ENCODE measurements at regions of chr20 and their contacts with region 1.

Region 1: GRCh38 chr20:25390538-25391528 is at the start of gene ABHD12:
- DNase-seq: peak; percentile 88 to 96 (median 92)
- ATAC-seq: peak; percentile 91
- H3K4me3 ChIP-seq: peak within 1 kb of the TSS; percentile 55 to 70
- H3K4me3 Mint-ChIP-seq: peak within 1 kb of the TSS; percentile 85
- H3K27ac ChIP-seq: peak within 1 kb of the TSS; percentile 47 to 51
- H3K27ac Mint-ChIP-seq: peak within 1 kb of the TSS; percentile 84
- H3K4me1 ChIP-seq: peaks cover 5% of the 10 kb centered on the region
- H3K4me1 Mint-ChIP-seq: peaks cover 20% of the 10 kb centered on the region
- H3K27me3 ChIP-seq: no peaks in the 10 kb centered on the region
- H3K27me3 Mint-ChIP-seq: no peaks in the 10 kb centered on the region
- CTCF ChIP-seq: no peak
- total RNA-seq, gene ABHD12: 14.1 to 17.9 TPM

Region 2: GRCh38 chr20:24027229-24027628 is 1363.6 kb before region 1 on chr20:
- CTCF ChIA-PET with region 1: no interaction called
- POLR2A ChIA-PET with region 1: no interaction called
- intact Hi-C with region 1: loop called in 1 of 2 experiments (anchors 10 kb)
- DNase-seq: peak; percentile 56 to 92 (median 78)
- ATAC-seq: peak; percentile 98
- H3K4me3 ChIP-seq: peak overlapping the region in 1 of 2 experiments; percentile 0
- H3K4me3 Mint-ChIP-seq: peak overlapping the region; percentile 62
- H3K27ac ChIP-seq: peak overlapping the region; percentile 82 to 94
- H3K27ac Mint-ChIP-seq: peak overlapping the region; percentile 97
- H3K4me1 ChIP-seq: peaks cover 26% of the 10 kb centered on the region
- H3K4me1 Mint-ChIP-seq: peaks cover 44% of the 10 kb centered on the region
- H3K27me3 ChIP-seq: no peaks in the 10 kb centered on the region
- H3K27me3 Mint-ChIP-seq: no peaks in the 10 kb centered on the region
- CTCF ChIP-seq: no peak

Region 3: GRCh38 chr20:25148181-25148981 is 242.5 kb before region 1 on chr20:
- CTCF ChIA-PET with region 1: no interaction called
- POLR2A ChIA-PET with region 1: no interaction called
- intact Hi-C with region 1: loop called in 1 of 2 experiments (anchors 5 kb)
- DNase-seq: peak; percentile 22 to 83 (median 73)
- ATAC-seq: peak; percentile 97
- H3K4me3 ChIP-seq: peak overlapping the region; percentile 47 to 49
- H3K4me3 Mint-ChIP-seq: peak overlapping the region; percentile 89
- H3K27ac ChIP-seq: peak overlapping the region in 1 of 2 experiments; percentile 3
- H3K27ac Mint-ChIP-seq: peak overlapping the region; percentile 86
- H3K4me1 ChIP-seq: peaks cover 7% of the 10 kb centered on the region
- H3K4me1 Mint-ChIP-seq: peaks cover 8% of the 10 kb centered on the region
- H3K27me3 ChIP-seq: no peaks in the 10 kb centered on the region
- H3K27me3 Mint-ChIP-seq: peaks cover 4% of the 10 kb centered on the region
- CTCF ChIP-seq: no peak

Region 4: DNA sequence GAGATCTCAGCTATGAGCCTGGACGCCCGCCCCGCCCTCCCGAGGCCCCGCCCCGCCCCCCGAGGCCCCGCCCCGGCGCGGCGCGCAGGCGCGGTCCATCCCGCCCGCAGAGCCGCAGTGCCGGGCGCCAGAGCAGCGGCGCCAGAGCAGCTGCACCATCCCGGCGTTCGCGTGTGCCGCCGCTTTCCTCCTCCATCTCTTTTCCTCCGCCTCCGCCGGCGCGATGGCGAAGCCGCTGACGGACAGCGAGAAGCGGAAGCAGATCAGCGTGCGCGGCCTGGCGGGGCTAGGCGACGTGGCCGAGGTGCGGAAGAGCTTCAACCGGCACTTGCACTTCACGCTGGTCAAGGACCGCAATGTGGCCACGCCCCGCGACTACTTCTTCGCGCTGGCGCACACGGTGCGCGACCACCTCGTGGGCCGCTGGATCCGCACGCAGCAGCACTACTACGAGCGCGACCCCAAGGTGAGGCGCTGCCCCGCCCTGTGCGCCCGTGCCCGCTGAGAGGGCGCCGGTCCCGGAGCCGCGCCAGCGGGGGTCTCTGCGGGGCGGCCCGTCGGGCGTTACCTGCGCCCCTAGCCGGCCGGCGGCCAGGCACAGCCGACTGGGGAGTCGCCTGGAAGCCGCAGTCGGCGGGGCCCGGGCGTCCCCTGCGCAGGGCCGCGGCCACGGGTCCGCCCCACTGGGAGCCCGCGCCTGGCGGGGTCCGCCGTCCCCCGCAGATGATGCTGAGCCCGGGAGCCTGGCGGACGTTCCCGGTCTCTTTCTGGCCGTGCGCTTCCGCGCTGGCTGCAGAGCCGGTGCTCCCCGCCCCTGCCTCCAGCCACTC is 142.7 kb before region 1 on chr20 and contains the start of gene PYGB:
- CTCF ChIA-PET with region 1: interaction called, 5 read pairs
- POLR2A ChIA-PET with region 1: no interaction called
- intact Hi-C with region 1: loop called (anchors 1 kb)
- DNase-seq: peak; percentile 65 to 87 (median 70)
- ATAC-seq: peak; percentile 88
- H3K4me3 ChIP-seq: peak within 1 kb of the TSS; percentile 97 to 99
- H3K4me3 Mint-ChIP-seq: peak within 1 kb of the TSS; percentile 93
- H3K27ac ChIP-seq: peak within 1 kb of the TSS; percentile 53 to 80
- H3K27ac Mint-ChIP-seq: peak within 1 kb of the TSS; percentile 91
- H3K4me1 ChIP-seq: peaks cover 29% of the 10 kb centered on the region
- H3K4me1 Mint-ChIP-seq: peaks cover 54% of the 10 kb centered on the region
- H3K27me3 ChIP-seq: no peaks in the 10 kb centered on the region
- H3K27me3 Mint-ChIP-seq: no peaks in the 10 kb centered on the region
- CTCF ChIP-seq: no peak
- total RNA-seq, gene PYGB: 35.2 to 39.2 TPM

Region 5: DNA sequence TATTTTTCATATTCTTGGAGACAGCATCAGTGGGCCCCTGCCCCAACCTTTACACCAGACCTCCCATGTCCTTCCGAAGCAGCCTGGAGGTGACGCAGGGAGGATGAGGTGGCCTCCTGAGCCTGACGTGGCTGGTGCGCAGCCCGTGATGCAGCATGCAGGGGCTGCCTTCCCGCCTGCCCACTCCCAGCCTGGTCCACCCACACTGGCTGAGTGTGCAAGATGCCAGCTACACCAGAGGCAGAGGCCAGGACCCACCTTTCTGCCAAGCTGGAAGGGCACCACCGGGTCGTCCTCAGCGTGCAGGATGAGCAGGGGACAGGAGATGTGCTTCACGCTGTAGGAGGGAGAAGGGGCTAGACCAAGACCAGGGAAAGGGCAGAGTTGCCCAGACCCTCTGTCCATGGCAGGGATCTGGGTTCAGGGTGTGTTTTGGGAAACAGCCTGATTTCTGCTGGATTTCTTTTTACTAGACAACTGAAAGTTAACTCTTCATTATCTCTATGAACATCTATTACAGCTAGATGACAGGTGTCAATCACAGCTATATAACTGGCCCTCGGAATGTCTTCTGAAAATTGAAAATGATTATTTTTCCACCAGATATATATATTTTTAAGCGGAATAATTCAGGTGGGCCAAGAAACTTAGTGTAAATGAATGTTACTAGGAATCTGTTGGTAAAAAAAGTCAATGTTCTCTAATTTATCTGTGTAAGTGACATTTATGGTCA is 87.4 kb before region 1 on chr20:
- CTCF ChIA-PET with region 1: no interaction called
- POLR2A ChIA-PET with region 1: no interaction called
- intact Hi-C with region 1: no loop called
- DNase-seq: no peak
- ATAC-seq: no peak
- H3K4me3 ChIP-seq: no peak overlapping the region
- H3K4me3 Mint-ChIP-seq: no peak overlapping the region
- H3K27ac ChIP-seq: no peak overlapping the region
- H3K27ac Mint-ChIP-seq: no peak overlapping the region
- H3K4me1 ChIP-seq: no peaks in the 10 kb centered on the region
- H3K4me1 Mint-ChIP-seq: no peaks in the 10 kb centered on the region
- H3K27me3 ChIP-seq: no peaks in the 10 kb centered on the region
- H3K27me3 Mint-ChIP-seq: no peaks in the 10 kb centered on the region
- CTCF ChIP-seq: no peak

Region 6: DNA sequence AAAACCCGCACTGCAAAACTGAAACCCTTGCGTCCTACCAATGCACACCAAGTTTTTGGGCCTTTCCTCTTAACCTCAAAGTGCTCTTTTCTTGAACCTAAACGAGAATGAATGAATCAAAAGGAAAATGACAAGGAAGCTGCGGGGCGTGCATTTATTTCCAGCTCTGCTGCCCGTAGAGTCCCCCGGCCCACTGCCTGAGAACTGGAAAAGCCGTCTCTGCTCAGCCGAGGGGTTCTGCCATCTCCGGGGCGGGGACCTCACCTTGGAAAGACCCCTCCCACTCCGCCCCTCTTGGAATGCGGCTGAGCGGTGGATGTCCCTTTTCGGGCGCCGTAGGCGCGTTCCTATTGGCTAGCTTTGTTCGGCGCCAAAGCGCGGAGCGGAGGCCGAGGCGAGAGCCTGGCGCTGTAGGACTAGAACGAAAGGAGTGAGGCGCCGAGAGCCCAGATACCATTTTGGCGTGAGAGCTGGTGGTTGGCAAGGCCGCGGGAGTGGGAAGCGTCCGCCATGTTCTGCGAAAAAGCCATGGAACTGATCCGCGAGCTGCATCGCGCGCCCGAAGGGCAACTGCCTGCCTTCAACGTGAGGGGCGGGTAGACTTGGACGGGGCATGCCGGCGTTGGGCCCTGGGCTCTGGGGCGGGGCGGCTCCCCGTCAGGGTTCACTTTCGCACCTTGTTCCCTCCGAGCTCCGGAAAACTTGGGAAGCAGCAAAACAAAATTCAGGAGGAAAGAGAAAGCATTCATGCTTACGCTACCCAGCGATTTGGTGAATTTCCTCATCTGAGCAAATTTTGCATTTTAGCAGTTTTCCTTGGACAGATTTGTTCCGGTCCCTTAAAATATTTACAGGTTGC is 16.7 kb after region 1 on chr20 and contains the start of gene GINS1:
- CTCF ChIA-PET with region 1: interaction called, 3 read pairs
- POLR2A ChIA-PET with region 1: interaction called, 3 read pairs
- intact Hi-C with region 1: loop called in 1 of 2 experiments (anchors 1 kb)
- DNase-seq: peak; percentile 37 to 82 (median 66)
- ATAC-seq: peak; percentile 86
- H3K4me3 ChIP-seq: peak within 1 kb of the TSS; percentile 71 to 85
- H3K4me3 Mint-ChIP-seq: peak within 1 kb of the TSS; percentile 94
- H3K27ac ChIP-seq: peak within 1 kb of the TSS; percentile 30 to 40
- H3K27ac Mint-ChIP-seq: peak within 1 kb of the TSS; percentile 87
- H3K4me1 ChIP-seq: peaks cover 5% of the 10 kb centered on the region
- H3K4me1 Mint-ChIP-seq: peaks cover 10% of the 10 kb centered on the region
- H3K27me3 ChIP-seq: no peaks in the 10 kb centered on the region
- H3K27me3 Mint-ChIP-seq: no peaks in the 10 kb centered on the region
- CTCF ChIP-seq: no peak
- total RNA-seq, gene GINS1: 0.28 to 0.30 TPM

Region 7: GRCh38 chr20:25486377-25486776 is 95.5 kb after region 1 on chr20:
- CTCF ChIA-PET with region 1: no interaction called
- POLR2A ChIA-PET with region 1: no interaction called
- intact Hi-C with region 1: no loop called
- DNase-seq: no peak
- ATAC-seq: no peak
- H3K4me3 ChIP-seq: no peak overlapping the region
- H3K4me3 Mint-ChIP-seq: no peak overlapping the region
- H3K27ac ChIP-seq: no peak overlapping the region
- H3K27ac Mint-ChIP-seq: no peak overlapping the region
- H3K4me1 ChIP-seq: peaks cover 23% of the 10 kb centered on the region
- H3K4me1 Mint-ChIP-seq: peaks cover 27% of the 10 kb centered on the region
- H3K27me3 ChIP-seq: no peaks in the 10 kb centered on the region
- H3K27me3 Mint-ChIP-seq: no peaks in the 10 kb centered on the region
- CTCF ChIP-seq: no peak

Region 8: GRCh38 chr20:25623736-25624499 is 233.1 kb after region 1 on chr20 and contains the start of gene NANP:
- CTCF ChIA-PET with region 1: no interaction called
- POLR2A ChIA-PET with region 1: no interaction called
- intact Hi-C with region 1: loop called (anchors 2 to 10 kb)
- DNase-seq: peak; percentile 56 to 94 (median 78)
- ATAC-seq: peak; percentile 79
- H3K4me3 ChIP-seq: peak within 1 kb of the TSS; percentile 73 to 82
- H3K4me3 Mint-ChIP-seq: peak within 1 kb of the TSS; percentile 96
- H3K27ac ChIP-seq: peak within 1 kb of the TSS; percentile 48 to 67
- H3K27ac Mint-ChIP-seq: peak within 1 kb of the TSS; percentile 94
- H3K4me1 ChIP-seq: peaks cover 11% of the 10 kb centered on the region
- H3K4me1 Mint-ChIP-seq: peaks cover 20% of the 10 kb centered on the region
- H3K27me3 ChIP-seq: no peaks in the 10 kb centered on the region
- H3K27me3 Mint-ChIP-seq: no peaks in the 10 kb centered on the region
- CTCF ChIP-seq: no peak
- total RNA-seq, gene NANP: 2.0 to 2.2 TPM

Measured in CD8-positive, alpha-beta T cell (primary cell).